MCF 10A (cell line): ENCODE measurements at regions of chr2 and their contacts with region 1.

Region 1: DNA sequence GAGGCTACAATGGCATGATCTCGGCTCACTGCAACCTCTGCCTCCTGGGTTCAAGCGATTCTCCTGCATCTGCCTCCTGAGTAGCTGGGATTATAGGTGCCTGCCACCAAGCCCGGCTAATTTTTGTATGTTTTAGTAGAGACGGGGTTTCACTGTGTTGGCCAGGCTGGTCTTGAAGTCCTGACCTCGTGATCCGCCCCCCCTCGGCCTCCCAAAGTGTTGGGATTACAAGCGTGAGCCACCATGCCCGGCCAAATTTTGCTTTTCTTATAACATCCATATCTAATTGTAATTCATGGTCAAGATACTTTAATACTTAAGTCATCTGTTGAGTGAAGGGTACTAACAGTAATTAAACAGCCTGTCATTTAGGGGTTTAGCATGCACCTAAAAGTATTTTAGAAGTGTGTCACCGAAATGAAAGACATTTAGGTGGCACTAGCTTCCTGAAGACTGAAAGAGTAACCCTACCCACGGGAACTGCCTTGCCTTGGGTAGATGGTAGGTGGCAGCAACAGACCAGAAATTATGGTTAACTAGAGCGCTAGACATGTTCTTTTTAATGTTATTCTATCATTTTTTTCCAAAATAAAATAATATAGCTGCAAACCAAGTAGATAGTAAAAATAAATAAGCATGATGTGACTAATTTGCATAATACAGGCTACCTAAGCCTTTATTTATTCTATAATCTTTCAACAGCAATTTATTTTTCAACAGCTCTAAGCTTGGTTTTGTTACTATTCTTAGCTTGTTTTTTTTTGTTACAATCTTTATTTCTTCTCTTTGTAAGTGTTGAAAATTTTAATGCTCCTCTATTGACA is 8.6 kb upstream of the ACYP2 start:
- DNase-seq: peak; percentile 68
- H3K4me3 Mint-ChIP-seq: no peak overlapping the region
- H3K27ac Mint-ChIP-seq: no peak overlapping the region
- H3K4me1 Mint-ChIP-seq: peaks cover 6% of the 10 kb centered on the region
- H3K27me3 Mint-ChIP-seq: no peaks in the 10 kb centered on the region
- CTCF ChIP-seq: peak; percentile 64

Region 2: DNA sequence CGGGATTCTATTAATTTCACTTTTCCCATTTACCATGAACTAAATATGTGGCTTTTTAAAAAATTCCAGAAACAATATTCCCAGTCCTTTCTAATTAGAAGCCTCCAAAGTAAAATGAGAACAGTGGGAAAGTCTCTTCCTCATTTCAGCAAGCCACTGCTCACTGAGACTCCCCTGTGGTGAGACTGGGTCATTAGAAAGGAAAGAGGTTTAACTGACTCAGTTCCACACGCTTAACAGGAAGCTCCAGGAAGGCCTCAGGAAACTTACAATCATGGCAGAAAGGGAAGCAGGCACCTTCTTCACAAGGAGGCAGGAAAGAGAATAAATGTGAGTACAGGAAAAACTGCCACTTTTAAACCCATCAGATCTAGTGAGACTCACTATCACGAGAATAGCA is 598.2 kb before region 1 on chr2:
- CTCF ChIA-PET with region 1: no interaction called
- POLR2A ChIA-PET with region 1: no interaction called
- intact Hi-C with region 1: no loop called
- DNase-seq: no peak
- H3K4me3 Mint-ChIP-seq: no peak overlapping the region
- H3K27ac Mint-ChIP-seq: no peak overlapping the region
- H3K4me1 Mint-ChIP-seq: peaks cover 25% of the 10 kb centered on the region
- H3K27me3 Mint-ChIP-seq: no peaks in the 10 kb centered on the region
- CTCF ChIP-seq: no peak

Region 3: GRCh38 chr2:53859206-53860181 is 247.3 kb before region 1 on chr2 and contains the start of gene GPR75:
- CTCF ChIA-PET with region 1: no interaction called
- POLR2A ChIA-PET with region 1: no interaction called
- intact Hi-C with region 1: no loop called
- DNase-seq: no peak
- H3K4me3 Mint-ChIP-seq: no peak within 1 kb of the TSS
- H3K27ac Mint-ChIP-seq: no peak within 1 kb of the TSS
- H3K4me1 Mint-ChIP-seq: no peaks in the 10 kb centered on the region
- H3K27me3 Mint-ChIP-seq: no peaks in the 10 kb centered on the region
- CTCF ChIP-seq: no peak
- total RNA-seq, gene GPR75: 4.0 and 5.2 TPM in 2 replicates

Region 4: DNA sequence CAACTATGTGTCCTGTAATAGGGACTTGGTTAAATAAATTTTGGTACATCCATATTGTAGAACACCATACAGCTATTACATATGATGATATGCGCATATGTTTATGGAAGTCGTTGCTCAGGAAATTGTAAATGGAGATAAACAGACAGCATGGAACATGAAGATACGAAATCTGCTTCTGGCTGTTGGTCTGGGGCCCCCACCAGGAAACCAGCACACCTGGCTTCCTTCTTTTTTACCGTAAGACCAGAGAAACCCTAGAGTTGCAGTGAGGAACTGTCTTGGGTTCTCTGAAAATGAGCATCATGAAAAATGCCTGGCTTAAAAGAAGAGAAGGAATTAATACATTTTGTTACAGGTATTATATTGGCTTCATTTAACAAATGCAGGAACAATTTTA is 390.1 kb after region 1 on chr2:
- CTCF ChIA-PET with region 1: interaction called, 19 read pairs
- POLR2A ChIA-PET with region 1: no interaction called
- intact Hi-C with region 1: no loop called
- DNase-seq: no peak
- H3K4me3 Mint-ChIP-seq: no peak overlapping the region
- H3K27ac Mint-ChIP-seq: no peak overlapping the region
- H3K4me1 Mint-ChIP-seq: no peaks in the 10 kb centered on the region
- H3K27me3 Mint-ChIP-seq: no peaks in the 10 kb centered on the region
- CTCF ChIP-seq: no peak

Region 5: GRCh38 chr2:54503192-54503591 is 396.3 kb after region 1 on chr2:
- CTCF ChIA-PET with region 1: interaction called, 19 read pairs
- POLR2A ChIA-PET with region 1: no interaction called
- intact Hi-C with region 1: loop called (anchors 1 kb)
- DNase-seq: peak; percentile 38
- H3K4me3 Mint-ChIP-seq: no peak overlapping the region
- H3K27ac Mint-ChIP-seq: no peak overlapping the region
- H3K4me1 Mint-ChIP-seq: no peaks in the 10 kb centered on the region
- H3K27me3 Mint-ChIP-seq: no peaks in the 10 kb centered on the region
- CTCF ChIP-seq: peak; percentile 50

Region 6: GRCh38 chr2:54657664-54658083 is 550.8 kb after region 1 on chr2:
- CTCF ChIA-PET with region 1: interaction called, 11 read pairs
- POLR2A ChIA-PET with region 1: no interaction called
- intact Hi-C with region 1: no loop called
- DNase-seq: peak; percentile 67
- H3K4me3 Mint-ChIP-seq: no peak overlapping the region
- H3K27ac Mint-ChIP-seq: no peak overlapping the region
- H3K4me1 Mint-ChIP-seq: no peaks in the 10 kb centered on the region
- H3K27me3 Mint-ChIP-seq: no peaks in the 10 kb centered on the region
- CTCF ChIP-seq: peak; percentile 61

Region 7: DNA sequence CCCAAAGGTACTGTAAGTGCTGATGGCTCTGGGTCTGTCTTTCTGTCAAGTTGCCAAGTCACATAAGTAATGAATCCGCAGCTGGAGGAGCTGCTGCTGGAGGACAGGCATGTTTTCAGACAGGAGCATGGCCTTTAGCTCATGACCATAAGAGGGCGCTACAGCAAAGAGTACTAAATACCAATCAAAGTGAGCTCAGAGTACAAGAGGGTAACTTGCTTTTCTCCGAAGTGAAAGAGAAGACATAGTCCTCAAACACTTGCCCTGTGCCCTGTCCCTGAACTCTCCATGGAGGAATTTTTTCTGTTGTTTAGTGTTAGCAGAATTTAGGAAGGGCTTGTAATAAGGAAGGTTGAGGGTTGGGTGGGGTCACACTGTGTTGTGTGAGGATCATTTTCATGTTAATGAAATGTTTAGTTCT is 558.6 kb after region 1 on chr2:
- CTCF ChIA-PET with region 1: interaction called, 12 read pairs
- POLR2A ChIA-PET with region 1: no interaction called
- intact Hi-C with region 1: no loop called
- DNase-seq: peak; percentile 69
- H3K4me3 Mint-ChIP-seq: peak overlapping the region; percentile 30
- H3K27ac Mint-ChIP-seq: peak overlapping the region; percentile 41
- H3K4me1 Mint-ChIP-seq: peaks cover 29% of the 10 kb centered on the region
- H3K27me3 Mint-ChIP-seq: no peaks in the 10 kb centered on the region
- CTCF ChIP-seq: peak; percentile 43

Region 8: GRCh38 chr2:54697934-54698333 is 591.1 kb after region 1 on chr2:
- CTCF ChIA-PET with region 1: interaction called, 10 read pairs
- POLR2A ChIA-PET with region 1: no interaction called
- intact Hi-C with region 1: no loop called
- DNase-seq: no peak
- H3K4me3 Mint-ChIP-seq: no peak overlapping the region
- H3K27ac Mint-ChIP-seq: no peak overlapping the region
- H3K4me1 Mint-ChIP-seq: no peaks in the 10 kb centered on the region
- H3K27me3 Mint-ChIP-seq: no peaks in the 10 kb centered on the region
- CTCF ChIP-seq: no peak